T-cell (primary cell): ENCODE measurements at regions of chr2 and their contacts with region 1.

Region 1: DNA sequence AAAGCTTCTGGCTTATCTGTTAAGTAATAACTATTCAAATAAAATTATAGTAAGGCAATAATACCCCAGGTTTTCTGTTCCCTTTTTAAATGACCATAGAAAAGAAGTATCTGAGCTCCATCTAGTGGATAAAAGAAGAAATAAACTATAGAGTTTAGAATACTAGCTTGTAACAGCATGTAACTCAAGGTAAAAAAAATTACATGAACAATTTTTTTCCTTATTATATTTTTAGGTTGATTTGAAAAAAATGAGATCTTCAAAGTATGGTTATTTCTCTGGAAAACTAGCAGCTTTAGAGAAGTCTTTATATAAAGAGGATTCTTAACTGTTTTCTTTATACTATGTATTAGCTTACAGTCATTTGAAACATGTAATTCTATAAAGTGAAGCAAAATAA is 58.1 kb downstream of the NCKAP1 start:
- DNase-seq: peak in 1 of 35 experiments; percentile 34
- ATAC-seq: no peak
- H3K4me3 ChIP-seq: no peak overlapping the region
- H3K4me3 Mint-ChIP-seq: no peak overlapping the region
- H3K27ac ChIP-seq: no peak overlapping the region
- H3K27ac Mint-ChIP-seq: no peak overlapping the region
- H3K4me1 ChIP-seq: no peaks in the 10 kb centered on the region
- H3K4me1 Mint-ChIP-seq: no peaks in the 10 kb centered on the region
- H3K27me3 ChIP-seq: no peaks in the 10 kb centered on the region
- H3K27me3 Mint-ChIP-seq: no peaks in the 10 kb centered on the region

Region 2: GRCh38 chr2:182186132-182186735 is 793.9 kb before region 1 on chr2:
- CTCF ChIA-PET with region 1: interaction called, 3 to 20 read pairs
- POLR2A ChIA-PET with region 1: no interaction called
- DNase-seq: peak in 1 of 35 experiments; percentile 44
- ATAC-seq: no peak
- H3K4me3 ChIP-seq: no peak overlapping the region
- H3K4me3 Mint-ChIP-seq: no peak overlapping the region
- H3K27ac ChIP-seq: no peak overlapping the region
- H3K27ac Mint-ChIP-seq: no peak overlapping the region
- H3K4me1 ChIP-seq: no peaks in the 10 kb centered on the region
- H3K4me1 Mint-ChIP-seq: no peaks in the 10 kb centered on the region
- H3K27me3 ChIP-seq: peaks cover 0 to 2% of the 10 kb centered on the region in 2 experiments
- H3K27me3 Mint-ChIP-seq: peaks cover 5 to 14% of the 10 kb centered on the region in 2 donors

Region 3: GRCh38 chr2:182666674-182667314 is 313.3 kb before region 1 on chr2:
- CTCF ChIA-PET with region 1: interaction called, 12 to 35 read pairs
- POLR2A ChIA-PET with region 1: interaction called in 1 of 2 experiments, 3 read pairs
- DNase-seq: peak in 5 of 35 experiments; percentile 2 to 61 (median 10)
- ATAC-seq: peak; percentile 50 to 61 (median 58)
- H3K4me3 ChIP-seq: no peak overlapping the region
- H3K4me3 Mint-ChIP-seq: no peak overlapping the region
- H3K27ac ChIP-seq: no peak overlapping the region
- H3K27ac Mint-ChIP-seq: no peak overlapping the region
- H3K4me1 ChIP-seq: no peaks in the 10 kb centered on the region
- H3K4me1 Mint-ChIP-seq: no peaks in the 10 kb centered on the region
- H3K27me3 ChIP-seq: peaks cover 0 to 2% of the 10 kb centered on the region in 2 experiments
- H3K27me3 Mint-ChIP-seq: no peaks in the 10 kb centered on the region

Region 4: DNA sequence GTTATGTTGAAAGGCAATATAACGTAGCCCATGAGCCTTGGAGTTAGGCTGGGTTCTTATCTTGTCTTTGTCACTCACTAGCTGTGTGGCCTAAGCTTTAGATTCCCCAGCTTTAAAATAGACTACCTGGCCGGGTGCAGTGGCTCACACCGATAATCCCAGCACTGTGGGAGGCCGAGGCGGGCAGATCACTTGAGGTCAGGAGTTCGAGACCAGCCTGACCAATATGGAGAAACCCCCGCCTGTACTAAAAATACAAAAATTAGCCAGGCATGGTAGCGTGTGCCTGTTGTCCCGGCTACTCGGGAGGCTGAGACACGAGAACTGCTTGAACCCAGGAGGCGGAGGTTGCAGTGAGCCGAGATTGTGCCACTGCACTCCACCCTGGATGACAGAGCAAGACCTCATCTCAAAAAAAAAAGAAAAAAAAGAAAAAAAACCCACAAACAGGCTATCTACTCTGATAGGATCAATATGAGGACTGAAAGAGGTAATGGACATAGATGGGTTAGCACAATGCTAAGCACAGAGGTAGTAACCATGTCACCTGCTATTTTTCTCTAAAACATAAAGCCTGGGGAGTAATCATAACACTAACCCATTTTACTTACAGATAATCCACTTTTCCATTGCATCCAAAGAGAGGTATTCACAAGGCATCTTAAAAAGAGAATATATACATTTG is 14.3 kb after region 1 on chr2:
- CTCF ChIA-PET with region 1: interaction called in 1 of 2 experiments, 11 read pairs
- POLR2A ChIA-PET with region 1: no interaction called
- DNase-seq: no peak
- ATAC-seq: no peak
- H3K4me3 ChIP-seq: no peak overlapping the region
- H3K4me3 Mint-ChIP-seq: no peak overlapping the region
- H3K27ac ChIP-seq: no peak overlapping the region
- H3K27ac Mint-ChIP-seq: no peak overlapping the region
- H3K4me1 ChIP-seq: no peaks in the 10 kb centered on the region
- H3K4me1 Mint-ChIP-seq: no peaks in the 10 kb centered on the region
- H3K27me3 ChIP-seq: no peaks in the 10 kb centered on the region
- H3K27me3 Mint-ChIP-seq: no peaks in the 10 kb centered on the region

Region 5: DNA sequence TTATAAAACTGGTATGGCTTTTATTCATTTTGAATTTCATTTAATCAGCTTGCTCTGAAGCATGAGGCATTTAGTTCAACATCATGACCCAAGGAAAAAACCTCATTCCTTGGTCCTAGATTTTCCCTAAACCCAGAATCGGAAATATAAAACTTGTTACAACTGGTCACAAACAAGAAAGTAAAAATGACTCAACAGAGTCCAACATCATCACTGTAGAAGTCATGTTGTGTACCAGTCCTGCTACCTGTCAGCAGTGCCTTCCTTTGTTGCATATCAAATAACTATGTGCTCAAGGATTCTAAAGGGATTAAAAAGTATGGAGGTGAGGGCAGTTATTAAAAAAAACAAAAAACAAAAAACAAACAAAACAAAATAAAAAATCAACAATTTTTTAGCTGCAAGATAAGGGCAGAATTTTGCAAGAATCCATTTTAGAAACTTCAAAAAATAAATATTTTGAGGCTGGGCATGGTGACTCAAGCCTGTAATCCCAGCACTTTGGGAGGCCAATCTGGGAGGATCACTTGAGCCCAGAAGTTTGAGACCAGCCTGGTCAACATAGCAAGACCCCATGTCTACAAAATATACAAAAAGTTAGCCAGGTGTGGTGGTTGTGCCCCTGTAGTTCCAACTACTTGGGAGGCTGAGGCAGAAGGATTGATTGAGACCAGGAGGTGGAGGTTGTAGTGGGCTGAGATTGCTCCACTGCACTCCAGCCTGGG is 39.8 kb after region 1 on chr2:
- CTCF ChIA-PET with region 1: no interaction called
- POLR2A ChIA-PET with region 1: no interaction called
- DNase-seq: no peak
- ATAC-seq: no peak
- H3K4me3 ChIP-seq: no peak overlapping the region
- H3K4me3 Mint-ChIP-seq: no peak overlapping the region
- H3K27ac ChIP-seq: no peak overlapping the region
- H3K27ac Mint-ChIP-seq: no peak overlapping the region
- H3K4me1 ChIP-seq: no peaks in the 10 kb centered on the region
- H3K4me1 Mint-ChIP-seq: no peaks in the 10 kb centered on the region
- H3K27me3 ChIP-seq: no peaks in the 10 kb centered on the region
- H3K27me3 Mint-ChIP-seq: peaks cover 2 to 13% of the 10 kb centered on the region in 2 donors

Region 6: DNA sequence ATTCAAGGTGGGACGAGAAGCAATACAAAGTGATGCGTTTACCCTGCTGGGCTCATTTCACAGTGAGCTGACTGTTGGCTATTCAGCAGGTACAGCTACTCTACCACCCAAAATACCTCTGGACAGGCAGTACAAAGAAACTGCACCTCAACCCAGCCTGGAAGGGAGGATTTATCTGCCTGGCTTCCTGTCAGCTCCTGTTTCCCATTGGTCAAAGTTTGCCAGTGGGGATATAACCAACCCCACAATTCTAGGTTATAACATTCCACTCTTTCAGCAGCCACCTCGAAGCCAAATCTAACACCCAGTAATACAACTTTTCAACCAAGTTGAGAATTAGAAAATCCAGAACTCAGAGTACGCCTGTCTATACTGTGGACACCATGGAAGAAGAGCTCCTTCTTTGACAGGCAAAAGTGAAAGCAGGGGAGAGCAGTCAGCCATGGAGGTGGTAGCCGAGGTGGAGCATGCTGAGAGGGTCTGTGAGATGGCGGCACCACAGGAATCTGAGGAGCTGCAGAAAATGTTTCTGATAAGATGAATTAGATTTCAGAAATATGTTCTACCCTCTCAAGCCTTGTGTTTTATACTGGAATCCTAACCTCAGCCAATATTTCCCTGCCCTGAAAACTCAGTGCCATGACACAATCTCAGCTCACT is 109.2 kb after region 1 on chr2:
- CTCF ChIA-PET with region 1: no interaction called
- POLR2A ChIA-PET with region 1: no interaction called
- DNase-seq: no peak
- ATAC-seq: no peak
- H3K4me3 ChIP-seq: no peak overlapping the region
- H3K4me3 Mint-ChIP-seq: no peak overlapping the region
- H3K27ac ChIP-seq: no peak overlapping the region
- H3K27ac Mint-ChIP-seq: no peak overlapping the region
- H3K4me1 ChIP-seq: no peaks in the 10 kb centered on the region
- H3K4me1 Mint-ChIP-seq: no peaks in the 10 kb centered on the region
- H3K27me3 ChIP-seq: no peaks in the 10 kb centered on the region
- H3K27me3 Mint-ChIP-seq: no peaks in the 10 kb centered on the region

Region 7: DNA sequence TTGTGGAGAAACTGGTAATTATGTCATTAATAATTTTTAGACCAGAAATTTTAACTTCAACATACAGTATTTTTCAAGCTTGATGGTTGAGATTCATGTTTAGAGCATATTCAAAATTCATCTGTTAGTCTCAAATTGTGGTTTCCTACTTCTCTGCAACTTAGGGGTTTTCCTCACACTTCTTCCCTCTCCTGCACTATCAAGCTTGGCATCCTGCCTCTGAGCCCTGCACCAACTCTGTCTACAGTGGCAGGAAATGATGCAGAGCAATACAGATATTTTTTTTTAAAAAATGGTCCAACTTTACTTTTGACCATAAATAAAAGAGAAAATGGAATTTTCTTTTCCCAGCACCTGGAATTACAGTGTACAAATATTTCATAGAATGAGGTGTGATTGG is 391.4 kb after region 1 on chr2:
- CTCF ChIA-PET with region 1: no interaction called
- POLR2A ChIA-PET with region 1: no interaction called
- DNase-seq: no peak
- ATAC-seq: no peak
- H3K4me3 ChIP-seq: no peak overlapping the region
- H3K4me3 Mint-ChIP-seq: no peak overlapping the region
- H3K27ac ChIP-seq: no peak overlapping the region
- H3K27ac Mint-ChIP-seq: no peak overlapping the region
- H3K4me1 ChIP-seq: no peaks in the 10 kb centered on the region
- H3K4me1 Mint-ChIP-seq: no peaks in the 10 kb centered on the region
- H3K27me3 ChIP-seq: no peaks in the 10 kb centered on the region
- H3K27me3 Mint-ChIP-seq: no peaks in the 10 kb centered on the region

Region 8: GRCh38 chr2:183408562-183408961 is 428.4 kb after region 1 on chr2:
- CTCF ChIA-PET with region 1: no interaction called
- POLR2A ChIA-PET with region 1: no interaction called
- DNase-seq: no peak
- ATAC-seq: no peak
- H3K4me3 ChIP-seq: no peak overlapping the region
- H3K4me3 Mint-ChIP-seq: no peak overlapping the region
- H3K27ac ChIP-seq: no peak overlapping the region
- H3K27ac Mint-ChIP-seq: no peak overlapping the region
- H3K4me1 ChIP-seq: no peaks in the 10 kb centered on the region
- H3K4me1 Mint-ChIP-seq: no peaks in the 10 kb centered on the region
- H3K27me3 ChIP-seq: no peaks in the 10 kb centered on the region
- H3K27me3 Mint-ChIP-seq: no peaks in the 10 kb centered on the region